GM10248 (cell line): ENCODE measurements at regions of chr11 and their contacts with region 1.

Region 1: GRCh38 chr11:15101072-15101709 is 13.5 kb upstream of the INSC start:
- DNase-seq: peak; percentile 49
- CTCF ChIP-seq: peak; percentile 90

Region 2: DNA sequence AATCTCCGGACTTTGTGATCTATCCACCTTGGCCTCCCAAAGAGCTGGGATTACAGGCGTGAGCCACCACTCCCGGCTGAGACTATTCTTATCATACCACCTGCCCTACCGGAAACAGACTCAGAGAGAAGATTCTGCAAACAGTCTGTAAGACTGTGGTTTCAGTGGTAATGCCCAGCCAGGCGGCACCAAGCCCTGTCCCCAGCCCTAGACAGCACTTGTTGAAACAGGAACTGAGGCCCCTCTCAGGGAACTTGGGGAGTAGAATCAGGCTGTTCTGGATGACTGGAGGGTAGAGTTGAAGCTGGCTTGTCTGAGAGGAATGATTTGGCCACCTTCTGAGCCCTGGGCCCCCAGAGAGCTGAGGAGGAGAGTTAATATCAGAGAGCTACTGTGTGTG is 12.2 kb after region 1 on chr11:
- CTCF ChIA-PET with region 1: interaction called, 45 read pairs
- POLR2A ChIA-PET with region 1: no interaction called
- DNase-seq: no peak
- CTCF ChIP-seq: no peak

Region 3: DNA sequence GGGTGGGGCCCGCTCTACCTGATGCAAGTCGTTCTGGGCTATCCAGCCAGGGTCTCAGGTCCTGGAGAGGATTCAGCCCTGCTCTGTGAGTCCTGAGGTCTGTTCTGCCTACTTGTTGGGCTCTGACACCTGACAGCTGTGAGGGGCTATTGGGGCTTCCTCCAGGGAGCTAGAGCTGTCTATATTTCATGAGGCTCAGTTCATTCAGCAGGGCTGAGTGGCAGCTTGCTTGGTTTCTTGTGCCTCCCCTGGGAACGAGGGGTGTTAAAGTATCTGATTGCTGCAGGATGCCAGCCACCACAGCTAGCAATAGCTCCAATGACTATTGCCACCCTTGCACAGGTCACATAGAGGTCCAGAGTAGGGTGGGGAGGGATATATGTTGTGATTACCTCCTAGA is 40.2 kb after region 1 on chr11:
- CTCF ChIA-PET with region 1: interaction called, 13 read pairs
- POLR2A ChIA-PET with region 1: no interaction called
- DNase-seq: no peak
- CTCF ChIP-seq: no peak

Region 4: DNA sequence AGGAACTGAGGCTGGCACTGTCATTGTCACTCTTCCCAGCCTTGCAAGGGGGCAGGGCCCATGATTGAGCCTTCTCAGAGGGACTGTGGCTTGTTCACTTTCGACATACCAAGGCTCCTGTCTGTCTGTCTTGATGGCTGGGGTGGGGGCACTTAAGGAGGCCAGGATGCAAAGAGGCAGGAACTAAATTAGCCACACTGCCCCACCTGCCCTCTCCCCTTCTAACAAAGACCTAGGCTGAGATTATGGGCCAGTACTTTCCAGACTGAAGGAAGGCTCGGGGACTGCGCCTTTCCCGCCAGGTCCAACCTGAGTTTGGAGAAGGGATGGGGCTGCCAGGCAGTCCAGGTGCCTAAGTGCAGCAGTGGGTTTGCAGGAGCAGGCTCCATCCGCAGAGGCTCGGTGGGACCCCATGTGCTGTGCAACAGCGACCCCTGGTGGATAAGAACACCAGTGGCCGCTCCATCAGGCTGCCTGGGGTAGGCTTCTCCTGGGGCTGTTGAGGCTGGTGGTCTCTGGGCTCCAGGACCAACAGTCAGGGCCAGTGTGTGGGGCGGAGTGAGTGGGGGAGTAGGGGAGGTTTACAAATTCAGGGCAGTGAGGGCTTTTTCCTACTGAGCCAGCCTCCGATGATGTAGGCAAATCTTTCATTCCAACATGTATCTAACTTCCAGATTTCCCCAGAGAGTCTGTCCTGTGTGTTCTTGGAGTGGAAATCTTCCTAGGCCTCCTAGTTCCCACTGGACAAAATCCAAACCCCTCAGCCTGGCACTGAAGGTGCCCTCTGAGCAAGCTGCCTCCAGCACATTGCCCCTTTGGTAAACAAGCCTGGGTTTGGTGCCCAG is 107.4 kb after region 1 on chr11:
- CTCF ChIA-PET with region 1: interaction called, 75 read pairs
- POLR2A ChIA-PET with region 1: interaction called, 4 read pairs
- DNase-seq: peak; percentile 84
- CTCF ChIP-seq: peak; percentile 94